HCT116 (cell line): ENCODE measurements at regions of chr9 and their contacts with region 1.

Region 1: GRCh38 chr9:131590908-131591844 is 45.9 kb downstream of the PRRT1B start:
- DNase-seq: peak; percentile 33
- ATAC-seq: peak; percentile 96
- H3K4me3 ChIP-seq: no peak overlapping the region
- H3K27ac ChIP-seq: no peak overlapping the region
- H3K4me1 ChIP-seq: no peaks in the 10 kb centered on the region
- H3K27me3 ChIP-seq: no peaks in the 10 kb centered on the region
- CTCF ChIP-seq: peak; percentile 78 to 99 (median 81)
- POLR2A ChIP-seq: no peak
- RAD21 ChIP-seq: peak; percentile 98

Region 2: DNA sequence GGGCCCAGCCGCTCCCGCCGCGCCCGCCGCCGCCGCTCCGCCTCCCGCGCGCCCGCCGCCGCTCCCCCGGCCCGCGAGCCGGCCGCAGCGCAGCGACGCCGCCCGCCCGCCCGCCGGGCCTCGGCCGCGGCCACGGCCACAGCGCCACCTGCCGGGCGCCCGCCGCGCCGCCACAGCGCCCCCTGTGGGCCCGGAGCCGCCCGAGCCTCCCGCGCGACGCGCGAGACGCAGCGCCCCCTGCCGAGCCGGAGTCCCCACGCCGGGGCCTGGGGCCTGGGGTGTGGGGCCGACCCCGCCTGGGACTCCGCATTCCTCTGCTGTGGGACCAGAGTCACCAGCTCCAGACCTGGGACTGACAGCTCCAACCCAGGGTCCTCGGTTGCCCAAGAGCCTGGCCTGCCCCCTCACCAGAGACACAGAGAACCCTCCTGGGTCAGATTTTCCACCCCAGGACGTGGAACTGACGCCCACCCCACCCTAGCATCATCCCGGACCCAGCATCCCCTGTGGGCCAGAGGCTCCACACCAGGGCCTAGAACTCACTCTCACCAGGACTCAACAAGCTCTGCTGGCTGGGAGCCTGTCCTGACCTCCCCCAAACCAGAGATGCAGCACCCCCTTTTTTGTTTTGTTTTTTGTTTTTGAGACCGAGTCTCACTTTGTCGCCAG is 148.9 kb after region 1 on chr9 and contains the start of gene RAPGEF1:
- CTCF ChIA-PET with region 1: interaction called, 7 read pairs
- POLR2A ChIA-PET with region 1: no interaction called
- RAD21 ChIA-PET with region 1: no interaction called
- intact Hi-C with region 1: loop called (anchors 1 kb)
- DNase-seq: no peak
- ATAC-seq: peak; percentile 85
- H3K4me3 ChIP-seq: peak within 1 kb of the TSS; percentile 69 to 86
- H3K27ac ChIP-seq: peak within 1 kb of the TSS; percentile 75
- H3K4me1 ChIP-seq: peaks cover 13 to 25% of the 10 kb centered on the region in 2 experiments
- H3K27me3 ChIP-seq: no peaks in the 10 kb centered on the region
- CTCF ChIP-seq: peak; percentile 72 to 97 (median 76)
- POLR2A ChIP-seq: no peak
- RAD21 ChIP-seq: peak; percentile 66
- total RNA-seq, gene RAPGEF1: 43.0 TPM

Region 3: DNA sequence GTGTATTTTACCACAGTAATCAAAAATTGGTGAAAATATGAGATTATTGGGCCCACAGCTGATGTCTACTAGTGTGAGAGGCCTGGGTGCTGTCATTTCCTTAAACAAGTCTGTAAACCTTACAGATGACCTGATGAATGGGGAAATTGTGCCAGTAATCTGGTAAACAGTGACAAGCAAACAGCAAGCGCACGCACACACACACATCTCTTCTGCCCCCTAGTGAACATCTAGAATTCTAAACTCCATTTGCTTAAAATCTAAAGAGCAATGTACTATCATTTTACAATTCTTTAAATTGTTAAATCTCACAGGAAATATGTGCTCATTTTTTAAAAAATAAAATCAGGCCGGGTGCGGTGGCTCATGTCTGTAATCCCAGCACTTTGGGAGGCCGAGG is 156.2 kb after region 1 on chr9:
- CTCF ChIA-PET with region 1: interaction called, 4 read pairs
- POLR2A ChIA-PET with region 1: no interaction called
- RAD21 ChIA-PET with region 1: no interaction called
- intact Hi-C with region 1: loop called (anchors 1 kb)
- DNase-seq: no peak
- ATAC-seq: peak; percentile 65
- H3K4me3 ChIP-seq: no peak overlapping the region
- H3K27ac ChIP-seq: no peak overlapping the region
- H3K4me1 ChIP-seq: no peaks in the 10 kb centered on the region
- H3K27me3 ChIP-seq: no peaks in the 10 kb centered on the region
- CTCF ChIP-seq: peak; percentile 52 to 83 (median 59)
- POLR2A ChIP-seq: no peak
- RAD21 ChIP-seq: peak; percentile 81